Body of pancreas (tissue), 4 donors: ENCODE measurements at regions of chr4 and their contacts with region 1.

Region 1: DNA sequence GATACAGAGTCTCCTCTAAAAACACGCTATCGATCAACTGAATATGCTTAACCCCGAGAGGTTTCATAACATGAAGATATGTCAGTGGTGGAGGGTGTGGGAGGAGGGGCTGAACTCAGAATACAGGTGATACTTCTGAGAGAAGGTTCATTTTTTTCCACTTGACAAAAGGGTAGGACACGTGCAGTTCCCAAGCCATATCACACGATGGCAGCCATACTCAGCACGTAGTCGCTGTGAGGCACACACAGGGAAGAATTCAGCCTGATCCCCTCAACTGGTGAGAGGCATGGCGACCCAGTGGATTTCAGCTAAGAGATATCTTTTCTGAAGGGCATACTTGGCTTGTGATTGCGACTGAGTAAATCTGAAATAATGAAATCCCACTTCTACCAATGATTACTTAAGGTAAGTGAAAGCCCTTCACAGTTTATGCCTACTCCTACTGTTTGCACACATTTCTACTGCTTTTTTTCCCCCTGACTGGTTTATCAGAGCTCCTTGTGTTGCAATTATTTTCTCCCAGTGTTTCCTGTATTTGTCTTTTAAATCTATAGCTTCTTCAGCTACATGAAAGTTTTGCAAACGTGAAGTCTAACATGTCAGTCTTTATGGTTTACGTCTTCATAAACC is 133.1 kb downstream of the CORIN start:
- DNase-seq: peak; percentile 52 to 68 (median 56)
- ATAC-seq: peak; percentile 84
- H3K4me3 ChIP-seq: no peak overlapping the region
- H3K27ac ChIP-seq: peak overlapping the region in 3 of 4 donors; percentile 2 to 62 (median 58)
- H3K4me1 ChIP-seq: peaks cover 12% of the 10 kb centered on the region
- H3K27me3 ChIP-seq: no peaks in the 10 kb centered on the region
- CTCF ChIP-seq: peak in 5 of 7 experiments; percentile 21 to 58 (median 52)
- POLR2A ChIP-seq: no peak

Region 2: GRCh38 chr4:47551682-47552081 is 153.1 kb before region 1 on chr4:
- intact Hi-C with region 1: no loop called
- DNase-seq: no peak
- ATAC-seq: no peak
- H3K4me3 ChIP-seq: no peak overlapping the region
- H3K27ac ChIP-seq: no peak overlapping the region
- H3K4me1 ChIP-seq: no peaks in the 10 kb centered on the region
- H3K27me3 ChIP-seq: no peaks in the 10 kb centered on the region
- CTCF ChIP-seq: no peak
- POLR2A ChIP-seq: no peak

Region 3: GRCh38 chr4:47836641-47837093 is 131.9 kb after region 1 on chr4:
- intact Hi-C with region 1: loop called (anchors 10 kb)
- DNase-seq: peak; percentile 79 to 88 (median 84)
- ATAC-seq: peak; percentile 94
- H3K4me3 ChIP-seq: peak overlapping the region; percentile 21 to 24
- H3K27ac ChIP-seq: no peak overlapping the region
- H3K4me1 ChIP-seq: peaks cover 27% of the 10 kb centered on the region
- H3K27me3 ChIP-seq: no peaks in the 10 kb centered on the region
- CTCF ChIP-seq: peak; percentile 57 to 84 (median 71)
- POLR2A ChIP-seq: no peak

Region 4: GRCh38 chr4:47933840-47934239 is 229.0 kb after region 1 on chr4:
- intact Hi-C with region 1: no loop called
- DNase-seq: no peak
- ATAC-seq: peak; percentile 75
- H3K4me3 ChIP-seq: no peak overlapping the region
- H3K27ac ChIP-seq: no peak overlapping the region
- H3K4me1 ChIP-seq: no peaks in the 10 kb centered on the region
- H3K27me3 ChIP-seq: no peaks in the 10 kb centered on the region
- CTCF ChIP-seq: peak; percentile 50 to 70 (median 57)
- POLR2A ChIP-seq: no peak